Activated B cell treated with CpG ODN at 0.5 μM for 24 hours (primary cell): ENCODE measurements at regions of chr1 and their contacts with region 1.

Region 1: GRCh38 chr1:47147047-47147785 is 10.0 kb downstream of the CYP4A22 start:
- DNase-seq: no peak
- ATAC-seq: no peak
- H3K4me3 Mint-ChIP-seq: no peak overlapping the region
- H3K27ac Mint-ChIP-seq: no peak overlapping the region
- H3K4me1 Mint-ChIP-seq: no peaks in the 10 kb centered on the region
- H3K27me3 Mint-ChIP-seq: peaks cover 15% of the 10 kb centered on the region
- CTCF ChIP-seq: no peak

Region 2: DNA sequence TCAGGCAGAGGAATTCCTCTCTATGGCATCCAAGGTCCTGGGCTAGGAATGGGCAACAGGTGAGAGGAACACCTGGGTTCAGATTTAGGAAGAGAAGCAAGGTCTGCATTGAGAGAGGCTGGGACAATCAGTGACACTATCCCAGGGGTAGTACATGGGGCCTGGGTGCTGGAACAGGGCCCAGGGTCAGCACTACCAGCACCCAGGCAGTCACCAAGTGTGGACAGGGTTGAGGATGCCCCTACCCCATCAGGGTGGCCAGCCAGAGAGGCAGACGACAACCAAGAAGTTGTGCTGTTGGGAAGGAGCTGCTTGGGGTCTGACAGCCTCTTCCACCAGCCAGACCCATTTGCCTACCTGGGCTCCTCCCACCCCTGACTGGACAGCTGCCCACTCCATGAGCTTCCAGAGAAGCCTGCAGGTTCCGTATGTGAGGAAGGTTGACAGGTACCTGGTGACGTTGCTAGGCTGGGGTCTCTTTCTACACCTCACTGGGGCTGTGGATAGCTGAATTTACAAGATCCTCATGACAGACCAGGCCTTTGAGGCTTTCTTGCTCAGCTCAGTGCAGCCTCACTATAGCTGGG is 219.9 kb before region 1 on chr1:
- CTCF ChIA-PET with region 1: no interaction called
- POLR2A ChIA-PET with region 1: no interaction called
- intact Hi-C with region 1: loop called (anchors 5 kb)
- DNase-seq: no peak
- ATAC-seq: no peak
- H3K4me3 Mint-ChIP-seq: no peak overlapping the region
- H3K27ac Mint-ChIP-seq: no peak overlapping the region
- H3K4me1 Mint-ChIP-seq: no peaks in the 10 kb centered on the region
- H3K27me3 Mint-ChIP-seq: peaks cover 16% of the 10 kb centered on the region
- CTCF ChIP-seq: no peak